ENCODE measurements at regions of chr6 and their contacts with region 1.

Region 1: GRCh38 chr6:28863604-28864320 is 60.0 kb downstream of the TRIM27 start:
- DNase-seq: peak; percentile 52 to 96 (median 88)
- ATAC-seq: peak; percentile 36 to 45
- H3K4me3 Mint-ChIP-seq: peak overlapping the region; percentile 89 to 98 (median 96)
- H3K27ac Mint-ChIP-seq: peak overlapping the region; percentile 85 to 100 (median 95)
- H3K4me1 Mint-ChIP-seq: peaks cover 23 to 50% (median 40%) of the 10 kb centered on the region in 4 donors
- H3K27me3 Mint-ChIP-seq: peaks cover 0 to 8% (median 0%) of the 10 kb centered on the region in 5 donors

Region 2: GRCh38 chr6:28789553-28790083 is 74.1 kb before region 1 on chr6:
- POLR2A ChIA-PET with region 1: no interaction called
- DNase-seq: no peak
- ATAC-seq: no peak
- H3K4me3 Mint-ChIP-seq: peak overlapping the region in 7 of 10 donors; percentile 0 to 56 (median 35)
- H3K27ac Mint-ChIP-seq: peak overlapping the region in 2 of 10 donors; percentile 45 to 88
- H3K4me1 Mint-ChIP-seq: peaks cover 8 to 21% (median 11%) of the 10 kb centered on the region in 4 donors
- H3K27me3 Mint-ChIP-seq: peaks cover 67 to 100% (median 83%) of the 10 kb centered on the region in 5 donors

Region 3: DNA sequence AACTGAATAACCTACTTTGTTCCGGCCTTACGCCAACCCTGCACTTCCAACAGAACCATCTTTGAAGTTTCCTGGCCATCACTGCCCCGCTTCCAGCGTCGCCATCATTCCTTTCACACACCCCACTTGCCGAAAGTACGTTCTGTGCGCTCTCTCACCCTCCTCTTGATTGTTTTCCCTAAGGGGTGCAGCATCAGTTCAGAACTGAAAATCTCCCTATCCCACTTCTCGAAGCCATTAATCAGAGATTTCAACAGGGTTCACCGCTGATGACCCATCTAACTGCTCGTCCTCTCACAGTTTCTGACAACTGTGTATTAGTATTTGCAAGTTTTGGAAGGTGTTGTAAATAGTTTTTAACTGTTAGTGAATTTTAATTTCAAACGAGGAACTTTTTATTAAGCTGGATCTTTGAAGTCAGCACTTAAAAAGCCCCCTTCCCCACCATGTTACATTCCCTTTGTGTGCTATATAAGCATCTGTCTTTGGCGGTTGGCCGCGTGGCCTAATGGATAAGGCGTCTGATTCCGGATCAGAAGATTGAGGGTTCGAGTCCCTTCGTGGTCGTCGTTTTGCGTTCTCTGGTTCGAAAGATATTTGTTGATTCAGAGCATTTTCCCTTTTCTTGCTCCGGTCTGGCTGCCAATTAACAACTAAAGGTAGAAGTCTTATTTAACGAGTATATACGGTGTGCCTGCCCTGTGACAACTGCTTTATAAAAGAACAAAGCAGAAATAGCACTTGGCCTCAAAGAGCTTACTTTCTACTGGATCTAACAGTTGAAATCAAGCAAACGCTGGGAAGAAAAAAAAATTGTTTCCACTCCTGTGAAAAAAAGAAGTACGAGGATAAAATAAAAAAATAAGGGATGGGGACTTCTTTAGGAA is 17.4 kb after region 1 on chr6:
- POLR2A ChIA-PET with region 1: interaction called, 255 read pairs
- DNase-seq: peak in 9 of 10 donors; percentile 39 to 77 (median 67)
- ATAC-seq: no peak
- H3K4me3 Mint-ChIP-seq: peak overlapping the region; percentile 80 to 93 (median 87)
- H3K27ac Mint-ChIP-seq: peak overlapping the region; percentile 67 to 98 (median 88)
- H3K4me1 Mint-ChIP-seq: peaks cover 16 to 54% (median 42%) of the 10 kb centered on the region in 4 donors
- H3K27me3 Mint-ChIP-seq: peaks cover 0 to 10% (median 0%) of the 10 kb centered on the region in 5 donors

Region 4: DNA sequence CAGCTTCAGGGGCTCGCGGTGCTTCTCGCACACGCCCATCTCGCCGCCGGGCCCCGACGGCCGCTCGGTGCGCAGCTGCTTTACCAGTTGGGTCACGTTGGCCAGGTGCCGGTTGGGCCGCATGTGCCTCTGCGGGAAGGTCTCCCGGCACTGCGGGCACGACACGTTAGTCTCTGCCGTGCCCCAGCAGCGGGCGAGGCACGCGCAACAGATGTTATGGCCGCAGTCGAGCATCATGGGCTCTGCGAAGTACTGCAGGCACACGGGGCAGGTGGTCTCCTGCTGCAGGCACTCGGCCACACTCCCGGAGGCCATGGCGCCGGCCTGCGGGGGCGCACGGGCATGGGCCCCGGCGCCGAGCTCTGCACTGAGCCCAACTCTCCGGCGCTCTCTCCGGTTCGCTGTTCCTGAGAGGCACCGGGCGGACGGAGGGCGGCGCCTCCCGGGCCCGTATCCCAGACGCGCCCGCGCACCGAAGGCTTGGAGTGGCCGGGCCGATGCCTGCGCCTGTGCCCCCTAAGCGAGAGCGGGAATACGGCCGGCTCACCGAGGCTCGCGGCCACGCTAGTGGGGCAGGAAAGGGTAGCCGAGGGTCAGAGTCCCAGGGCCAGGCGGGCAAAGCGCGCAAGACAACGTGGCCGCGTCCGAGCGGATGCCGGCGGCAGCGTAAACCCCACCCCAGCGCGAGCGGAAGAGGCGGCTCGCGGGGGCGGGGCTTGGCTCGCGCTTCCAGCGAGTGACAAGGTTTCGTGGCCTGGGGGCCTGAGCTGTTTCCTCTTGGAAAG is 59.7 kb after region 1 on chr6 and contains the start of gene TRIM27:
- POLR2A ChIA-PET with region 1: interaction called, 51 read pairs
- DNase-seq: peak; percentile 57 to 83 (median 78)
- ATAC-seq: peak; percentile 78 to 80
- H3K4me3 Mint-ChIP-seq: peak within 1 kb of the TSS; percentile 86 to 98 (median 94)
- H3K27ac Mint-ChIP-seq: peak within 1 kb of the TSS; percentile 89 to 96 (median 94)
- H3K4me1 Mint-ChIP-seq: peaks cover 7 to 47% (median 40%) of the 10 kb centered on the region in 4 donors
- H3K27me3 Mint-ChIP-seq: no peaks in the 10 kb centered on the region
- polyA plus RNA-seq, gene TRIM27: 37.5 to 71.3 (median 44.2) TPM

Region 5: DNA sequence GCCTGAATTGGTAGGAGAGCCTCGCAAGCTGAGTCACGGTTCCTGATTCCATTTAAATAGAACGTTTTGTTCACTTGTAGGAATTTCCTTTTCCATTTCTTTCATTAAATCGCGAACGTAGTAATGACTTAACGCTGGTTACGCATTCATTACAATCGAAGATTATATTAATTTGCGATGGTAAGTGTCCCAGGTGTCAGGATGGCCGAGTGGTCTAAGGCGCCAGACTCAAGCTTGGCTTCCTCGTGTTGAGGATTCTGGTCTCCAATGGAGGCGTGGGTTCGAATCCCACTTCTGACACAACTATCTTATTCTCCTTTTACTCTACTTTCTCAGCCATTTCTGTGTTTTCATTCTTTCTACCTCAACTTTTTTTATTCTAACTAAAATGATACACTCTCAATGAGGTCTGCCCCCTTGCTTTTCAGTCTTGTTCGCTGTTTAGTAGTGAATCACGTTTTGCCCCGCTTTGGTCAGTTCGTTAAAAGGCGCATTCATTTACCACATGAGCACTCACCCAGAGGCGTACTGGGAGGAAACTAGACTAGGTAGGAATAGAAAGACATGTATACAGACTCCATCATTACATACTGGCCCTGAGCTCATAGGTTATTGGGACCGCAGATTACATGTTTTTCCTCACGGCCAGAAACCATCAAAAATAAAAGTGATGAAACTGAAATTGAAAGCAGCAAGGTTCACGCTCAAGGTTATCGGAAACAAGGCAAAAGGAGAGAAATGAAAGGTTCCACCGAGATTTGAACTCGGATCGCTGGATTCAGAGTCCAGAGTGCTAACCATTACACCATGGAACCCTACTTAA is 77.3 kb after region 1 on chr6:
- POLR2A ChIA-PET with region 1: interaction called, 37 read pairs
- DNase-seq: peak; percentile 41 to 89 (median 84)
- ATAC-seq: peak; percentile 65 to 70
- H3K4me3 Mint-ChIP-seq: peak overlapping the region; percentile 84 to 98 (median 94)
- H3K27ac Mint-ChIP-seq: peak overlapping the region; percentile 92 to 99 (median 94)
- H3K4me1 Mint-ChIP-seq: peaks cover 27 to 61% (median 56%) of the 10 kb centered on the region in 4 donors
- H3K27me3 Mint-ChIP-seq: peaks cover 0 to 11% (median 0%) of the 10 kb centered on the region in 5 donors

Region 6: DNA sequence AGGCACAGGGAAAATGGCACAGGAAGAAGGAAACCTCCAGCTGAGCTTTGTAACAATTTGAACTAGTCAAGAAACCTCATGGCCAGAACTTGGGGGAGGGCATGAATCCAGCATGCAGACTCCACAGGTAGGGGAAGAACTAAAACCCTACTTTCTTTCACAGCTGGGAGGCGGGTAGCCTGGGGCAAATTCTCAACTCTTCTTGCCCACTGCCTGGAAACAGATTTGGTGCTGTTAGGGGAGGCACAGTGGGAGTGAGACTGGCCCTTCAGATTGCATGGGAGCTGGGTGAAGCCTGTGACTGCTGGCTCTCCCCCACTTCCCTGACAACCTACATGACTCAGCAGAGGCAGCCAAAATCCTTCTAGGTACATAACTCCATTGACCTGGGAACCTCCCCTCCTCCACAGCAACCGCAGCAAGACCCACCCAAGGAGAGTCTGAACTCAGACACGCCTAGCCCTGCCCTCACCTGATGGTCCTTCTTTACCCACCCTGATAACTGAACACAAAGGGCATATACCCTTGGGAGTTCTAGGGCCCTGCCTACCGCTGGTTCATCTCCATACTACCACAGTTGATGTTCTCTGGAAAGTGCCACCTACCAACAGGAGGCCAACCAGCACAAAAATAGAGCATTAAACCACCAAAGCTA is 97.2 kb after region 1 on chr6:
- POLR2A ChIA-PET with region 1: no interaction called
- DNase-seq: no peak
- ATAC-seq: no peak
- H3K4me3 Mint-ChIP-seq: no peak overlapping the region
- H3K27ac Mint-ChIP-seq: peak overlapping the region in 1 of 10 donors; percentile 16
- H3K4me1 Mint-ChIP-seq: no peaks in the 10 kb centered on the region
- H3K27me3 Mint-ChIP-seq: peaks cover 6 to 45% (median 38%) of the 10 kb centered on the region in 5 donors

Region 7: GRCh38 chr6:28981833-28982475 is 118.2 kb after region 1 on chr6:
- POLR2A ChIA-PET with region 1: interaction called, 13 read pairs
- DNase-seq: peak; percentile 49 to 95 (median 76)
- ATAC-seq: peak; percentile 61 to 74
- H3K4me3 Mint-ChIP-seq: peak overlapping the region; percentile 79 to 97 (median 92)
- H3K27ac Mint-ChIP-seq: peak overlapping the region; percentile 86 to 100 (median 93)
- H3K4me1 Mint-ChIP-seq: peaks cover 31 to 76% (median 62%) of the 10 kb centered on the region in 4 donors
- H3K27me3 Mint-ChIP-seq: peaks cover 9 to 43% (median 31%) of the 10 kb centered on the region in 5 donors

Region 8: DNA sequence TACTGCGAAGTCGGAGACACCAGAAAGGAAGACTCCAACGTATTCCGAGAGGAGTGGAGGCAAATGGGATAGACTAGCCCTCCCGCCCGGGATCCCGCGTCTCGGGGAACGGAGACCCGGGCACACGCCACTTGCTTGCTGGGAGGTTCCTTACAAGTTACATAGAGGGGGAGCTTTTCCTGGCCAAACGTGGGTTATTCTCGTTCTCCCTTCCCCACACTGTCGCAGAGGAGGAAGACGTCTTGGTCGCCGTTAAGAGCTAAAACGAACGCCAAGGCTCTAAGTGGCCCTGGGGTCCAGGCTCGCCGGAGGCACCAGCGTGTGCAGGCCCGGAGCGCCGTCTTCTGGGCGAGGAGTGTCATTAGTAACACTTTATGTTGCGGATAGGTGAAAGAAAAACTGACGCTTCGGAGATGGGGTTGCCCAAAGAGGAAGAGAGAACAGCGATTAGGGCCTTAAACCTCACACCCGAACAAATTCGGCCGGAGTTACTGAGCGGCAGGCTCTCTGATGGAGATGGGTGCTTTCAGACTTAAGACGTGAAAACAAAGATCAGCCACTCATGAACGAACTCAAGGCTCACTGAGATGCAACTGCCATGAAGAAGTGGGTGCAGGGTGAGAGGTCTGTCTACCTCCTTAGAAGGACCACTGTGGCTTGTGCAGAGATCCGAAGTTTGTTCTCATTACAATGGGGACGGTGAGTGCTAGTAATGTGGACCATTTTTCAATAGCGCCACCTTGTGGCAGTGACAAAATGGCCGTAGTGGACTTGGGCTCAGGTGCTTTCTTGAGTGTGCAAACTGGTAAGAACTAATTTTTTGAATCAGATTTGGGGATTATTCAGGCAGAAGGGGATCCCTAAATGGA is 153.0 kb after region 1 on chr6:
- POLR2A ChIA-PET with region 1: interaction called, 12 read pairs
- DNase-seq: peak; percentile 63 to 89 (median 79)
- ATAC-seq: peak; percentile 73 to 75
- H3K4me3 Mint-ChIP-seq: peak overlapping the region; percentile 82 to 95 (median 91)
- H3K27ac Mint-ChIP-seq: peak overlapping the region; percentile 65 to 96 (median 82)
- H3K4me1 Mint-ChIP-seq: peaks cover 12 to 20% (median 19%) of the 10 kb centered on the region in 4 donors
- H3K27me3 Mint-ChIP-seq: peaks cover 0 to 42% (median 5%) of the 10 kb centered on the region in 5 donors